Calu3 (cell line): ENCODE measurements at regions of chr20 and their contacts with region 1.

Region 1: DNA sequence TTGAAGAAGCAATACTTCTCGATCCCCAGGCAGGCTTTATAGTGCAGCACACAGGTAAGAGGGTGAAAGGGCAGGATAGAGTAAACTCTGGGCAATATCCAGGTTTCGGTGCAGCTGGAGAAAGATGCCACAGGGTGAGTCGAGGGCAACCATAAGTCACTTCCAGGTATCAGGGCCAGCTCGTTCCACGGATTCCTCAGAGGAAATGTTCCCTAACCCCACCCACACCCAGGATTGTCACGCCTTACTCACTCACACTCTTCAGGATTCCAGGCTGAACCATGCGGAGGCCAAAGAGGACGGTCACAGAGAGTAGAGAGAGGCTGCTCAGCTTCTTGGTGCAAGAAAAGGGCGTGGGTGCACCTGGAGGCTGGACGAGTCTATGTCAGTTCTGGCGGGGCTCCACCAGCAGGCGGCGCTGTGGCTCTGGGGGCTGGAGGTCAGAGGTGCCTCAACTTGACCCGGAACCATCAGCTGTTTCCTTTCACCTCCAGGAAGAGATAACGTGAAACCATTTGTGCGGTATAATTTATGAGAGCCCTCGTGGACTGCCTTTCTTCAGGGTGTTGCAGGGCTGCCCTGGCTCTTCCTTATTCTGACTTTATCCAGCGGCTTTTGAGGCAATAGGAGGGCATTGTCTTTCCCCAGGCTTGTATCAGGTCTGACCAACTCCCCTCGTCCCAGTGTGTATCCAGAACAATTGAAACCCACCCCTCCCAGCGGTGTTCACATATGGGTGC is 14.5 kb upstream of the WFDC12 start:
- DNase-seq: peak; percentile 90
- H3K4me3 Mint-ChIP-seq: no peak overlapping the region
- H3K27ac Mint-ChIP-seq: no peak overlapping the region
- H3K4me1 Mint-ChIP-seq: no peaks in the 10 kb centered on the region
- H3K27me3 Mint-ChIP-seq: peaks cover 18% of the 10 kb centered on the region
- CTCF ChIP-seq: peak; percentile 99

Region 2: GRCh38 chr20:45070932-45071632 is 67.6 kb before region 1 on chr20:
- CTCF ChIA-PET with region 1: no interaction called
- intact Hi-C with region 1: no loop called
- DNase-seq: peak; percentile 31
- H3K4me3 Mint-ChIP-seq: no peak overlapping the region
- H3K27ac Mint-ChIP-seq: peak overlapping the region; percentile 4
- H3K4me1 Mint-ChIP-seq: peaks cover 24% of the 10 kb centered on the region
- H3K27me3 Mint-ChIP-seq: no peaks in the 10 kb centered on the region
- CTCF ChIP-seq: no peak

Region 3: GRCh38 chr20:45088247-45088646 is 50.5 kb before region 1 on chr20:
- CTCF ChIA-PET with region 1: no interaction called
- intact Hi-C with region 1: no loop called
- DNase-seq: no peak
- H3K4me3 Mint-ChIP-seq: no peak overlapping the region
- H3K27ac Mint-ChIP-seq: no peak overlapping the region
- H3K4me1 Mint-ChIP-seq: no peaks in the 10 kb centered on the region
- H3K27me3 Mint-ChIP-seq: no peaks in the 10 kb centered on the region
- CTCF ChIP-seq: no peak

Region 4: DNA sequence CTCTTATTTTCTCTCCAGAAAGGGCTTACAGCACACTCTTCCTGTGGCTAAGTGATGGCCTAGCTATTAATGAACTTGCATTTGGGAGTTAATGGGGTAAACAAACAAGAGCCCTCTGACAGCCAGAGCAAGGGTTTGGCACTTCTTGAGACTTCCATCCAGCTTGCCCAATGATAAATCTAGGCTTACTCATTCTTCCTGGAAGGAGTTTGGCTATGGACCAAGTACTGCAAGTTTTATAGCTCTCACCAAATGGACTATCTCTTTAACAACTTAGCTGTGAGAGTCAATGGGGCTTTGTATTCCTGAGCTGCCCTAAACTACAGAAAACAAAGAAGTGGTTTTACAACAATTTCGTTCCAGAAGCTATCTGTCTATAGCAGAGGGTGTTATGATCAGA is 19.2 kb after region 1 on chr20:
- CTCF ChIA-PET with region 1: interaction called, 12 read pairs
- intact Hi-C with region 1: no loop called
- DNase-seq: peak; percentile 57
- H3K4me3 Mint-ChIP-seq: peak overlapping the region; percentile 18
- H3K27ac Mint-ChIP-seq: peak overlapping the region; percentile 0
- H3K4me1 Mint-ChIP-seq: peaks cover 26% of the 10 kb centered on the region
- H3K27me3 Mint-ChIP-seq: peaks cover 28% of the 10 kb centered on the region
- CTCF ChIP-seq: no peak